OCI-LY7 (cell line): ENCODE measurements at regions of chr22 and their contacts with region 1.

Region 1: DNA sequence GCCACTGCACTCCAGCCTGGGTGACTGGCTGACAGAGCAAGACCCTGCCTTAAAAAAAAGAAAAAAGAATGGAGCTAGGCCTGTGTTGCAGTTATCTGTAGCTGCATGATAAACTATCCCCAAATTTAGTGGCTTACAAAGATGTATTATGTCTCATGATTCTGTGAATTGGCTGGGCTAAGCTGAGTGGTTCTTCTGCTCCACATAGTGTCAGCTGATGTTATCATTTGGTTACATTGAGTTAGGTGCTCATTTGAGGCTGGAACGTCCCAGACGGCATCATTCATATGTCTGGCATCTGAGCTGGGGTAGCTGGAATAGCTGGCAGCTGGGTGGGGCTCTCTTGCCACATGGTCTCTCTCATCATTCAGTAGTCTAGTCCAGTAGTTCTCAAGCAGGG is 8.2 kb upstream of the ASCC2 start:
- DNase-seq: no peak
- H3K4me3 ChIP-seq: no peak overlapping the region
- H3K27ac ChIP-seq: no peak overlapping the region
- H3K4me1 ChIP-seq: no peaks in the 10 kb centered on the region
- CTCF ChIP-seq: no peak

Region 2: DNA sequence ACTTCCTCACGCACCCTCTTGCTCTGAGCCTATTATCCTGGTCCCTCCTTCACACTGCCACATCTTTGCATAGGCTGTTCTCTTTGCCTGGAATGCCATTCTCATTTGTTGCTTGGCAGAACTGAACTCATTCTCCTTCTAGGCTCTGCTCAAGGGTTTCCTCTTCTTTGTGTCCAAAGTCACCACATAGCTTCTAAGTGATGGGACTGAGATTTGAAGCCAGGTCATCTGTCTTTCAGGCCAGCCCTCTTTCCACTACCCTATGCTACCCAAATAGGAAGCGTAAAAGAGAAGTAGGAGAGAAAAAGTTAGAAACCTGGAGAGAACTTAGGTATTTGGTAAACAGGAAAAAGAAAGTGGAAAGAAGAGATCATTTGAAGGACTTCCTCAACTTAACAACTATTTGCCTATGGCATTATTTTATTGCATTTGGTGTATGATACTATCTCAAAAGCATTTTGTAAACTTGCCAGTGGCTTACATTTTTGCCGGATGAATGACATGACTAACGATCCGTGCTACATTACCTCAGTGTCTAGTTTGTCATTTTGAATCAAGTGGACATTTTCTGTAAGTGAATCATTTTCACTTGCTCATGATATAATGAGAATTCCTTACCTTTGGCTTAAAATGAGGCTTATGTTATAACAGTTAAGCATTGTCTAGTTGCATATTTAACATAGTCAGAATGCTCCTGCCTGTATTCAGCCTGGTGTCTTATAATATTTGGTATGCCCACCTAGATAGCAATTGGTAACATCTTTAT is 224.3 kb before region 1 on chr22:
- CTCF ChIA-PET with region 1: no interaction called
- POLR2A ChIA-PET with region 1: no interaction called
- intact Hi-C with region 1: no loop called
- DNase-seq: no peak
- H3K4me3 ChIP-seq: no peak overlapping the region
- H3K27ac ChIP-seq: no peak overlapping the region
- H3K4me1 ChIP-seq: peaks cover 11% of the 10 kb centered on the region
- CTCF ChIP-seq: no peak

Region 3: DNA sequence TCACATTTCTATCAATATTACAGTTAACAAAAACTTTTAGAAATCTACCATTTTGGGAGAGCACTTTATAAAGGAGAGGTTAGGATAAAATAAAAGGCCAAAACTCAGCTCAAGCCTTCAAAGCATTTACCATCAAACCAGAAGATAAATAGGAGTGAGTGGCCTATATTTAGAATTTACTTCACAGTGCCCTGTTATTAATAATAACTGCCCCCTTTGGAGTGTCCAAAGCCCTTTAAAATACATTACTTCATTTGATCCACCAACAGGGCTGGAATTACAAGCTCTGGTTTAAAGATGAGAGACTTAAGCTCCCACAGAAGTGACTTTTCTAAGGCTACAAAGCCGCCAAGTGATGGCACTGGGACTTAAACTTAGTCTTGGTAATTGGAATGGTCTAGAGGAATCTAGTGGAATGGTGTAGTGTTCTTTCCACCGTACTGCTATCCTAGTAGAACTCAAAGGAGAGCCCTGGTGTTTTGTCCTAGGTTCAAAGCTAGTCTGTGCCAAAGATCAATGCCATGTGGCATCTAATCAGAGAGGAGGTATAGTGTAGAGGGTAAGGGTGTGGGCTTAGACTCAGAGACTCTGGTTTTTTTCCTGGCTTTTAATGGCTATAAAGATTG is 15.5 kb after region 1 on chr22:
- CTCF ChIA-PET with region 1: no interaction called
- POLR2A ChIA-PET with region 1: interaction called, 10 read pairs
- intact Hi-C with region 1: no loop called
- DNase-seq: no peak
- H3K4me3 ChIP-seq: no peak overlapping the region
- H3K27ac ChIP-seq: no peak overlapping the region
- H3K4me1 ChIP-seq: no peaks in the 10 kb centered on the region
- CTCF ChIP-seq: no peak